Calu3 (cell line): ENCODE measurements at regions of chr12 and their contacts with region 1.

Region 1: DNA sequence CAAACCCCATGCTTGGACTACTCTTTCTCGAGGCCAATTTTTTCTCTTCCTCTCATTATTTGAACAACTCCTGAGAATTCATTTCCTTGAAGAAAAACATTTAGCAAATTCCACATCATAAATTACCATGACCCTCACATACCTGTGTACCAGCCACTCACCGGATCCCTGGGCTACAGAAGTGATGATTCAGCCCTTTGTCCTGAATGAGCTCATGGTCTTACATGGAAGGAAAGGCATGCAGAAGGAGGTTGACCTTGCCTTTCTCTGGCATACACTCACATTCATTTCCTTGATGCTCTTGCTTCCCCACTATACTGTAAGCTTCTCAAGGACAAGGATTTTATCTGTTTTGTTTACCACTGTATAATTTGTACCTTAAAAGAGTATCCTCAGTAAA is 191.5 kb downstream of the SLC5A8 start:
- DNase-seq: peak; percentile 88
- H3K4me3 Mint-ChIP-seq: peak overlapping the region; percentile 12
- H3K27ac Mint-ChIP-seq: peak overlapping the region; percentile 99
- H3K4me1 Mint-ChIP-seq: peaks cover 54% of the 10 kb centered on the region
- H3K27me3 Mint-ChIP-seq: no peaks in the 10 kb centered on the region
- CTCF ChIP-seq: no peak

Region 2: DNA sequence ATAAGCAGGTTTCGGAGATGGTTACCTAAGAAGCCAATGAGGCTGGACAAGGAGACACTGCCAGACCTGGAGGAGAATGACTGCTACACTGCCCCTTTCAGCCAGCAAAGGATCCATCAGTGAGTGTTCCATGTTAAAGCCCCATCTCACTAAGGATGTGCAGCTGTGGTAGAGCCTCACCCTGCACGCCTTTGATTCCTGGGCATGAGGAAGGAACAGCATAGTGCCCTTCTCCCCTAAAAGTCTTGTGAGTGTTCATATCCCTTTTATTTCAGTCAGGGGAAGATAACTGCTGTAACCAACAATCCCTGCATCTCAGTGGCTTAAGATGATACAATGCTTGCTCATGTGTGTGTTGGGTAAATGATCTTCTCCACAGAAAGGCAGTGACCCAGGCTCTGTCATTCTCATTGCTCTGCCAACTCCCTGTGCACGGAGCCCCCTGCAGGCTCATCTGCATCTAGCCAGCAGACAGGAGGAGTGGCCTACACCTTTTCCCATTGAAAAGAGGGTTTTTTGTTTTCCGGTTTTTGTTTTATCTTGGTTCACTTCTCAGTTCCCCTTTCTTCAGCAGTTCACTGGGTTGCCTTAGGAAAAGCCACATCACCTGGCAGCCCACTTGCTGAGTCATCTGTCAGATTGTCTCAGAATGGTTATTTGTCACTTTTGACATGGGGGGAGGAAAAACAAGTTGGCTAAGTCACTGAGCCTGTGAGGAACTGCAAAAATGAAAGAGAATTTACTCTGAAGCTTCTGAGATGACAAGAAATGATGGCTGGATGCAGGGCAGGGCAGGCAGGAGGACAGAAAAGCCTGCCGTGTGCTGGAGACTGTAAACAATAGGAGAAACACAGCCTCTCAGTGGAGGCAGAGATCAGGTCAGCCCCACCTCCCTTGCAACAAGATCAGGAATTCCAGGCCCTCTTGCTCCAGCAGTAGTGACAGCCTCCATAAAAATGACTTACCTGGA is 30.7 kb before region 1 on chr12:
- CTCF ChIA-PET with region 1: no interaction called
- intact Hi-C with region 1: loop called (anchors 2 kb)
- DNase-seq: peak; percentile 72
- H3K4me3 Mint-ChIP-seq: no peak overlapping the region
- H3K27ac Mint-ChIP-seq: peak overlapping the region; percentile 12
- H3K4me1 Mint-ChIP-seq: peaks cover 10% of the 10 kb centered on the region
- H3K27me3 Mint-ChIP-seq: no peaks in the 10 kb centered on the region
- CTCF ChIP-seq: peak; percentile 22

Region 3: GRCh38 chr12:101051901-101052550 is 33.5 kb after region 1 on chr12:
- CTCF ChIA-PET with region 1: no interaction called
- intact Hi-C with region 1: loop called (anchors 5 kb)
- DNase-seq: peak; percentile 47
- H3K4me3 Mint-ChIP-seq: peak overlapping the region; percentile 15
- H3K27ac Mint-ChIP-seq: peak overlapping the region; percentile 71
- H3K4me1 Mint-ChIP-seq: peaks cover 26% of the 10 kb centered on the region
- H3K27me3 Mint-ChIP-seq: no peaks in the 10 kb centered on the region
- CTCF ChIP-seq: no peak

Region 4: DNA sequence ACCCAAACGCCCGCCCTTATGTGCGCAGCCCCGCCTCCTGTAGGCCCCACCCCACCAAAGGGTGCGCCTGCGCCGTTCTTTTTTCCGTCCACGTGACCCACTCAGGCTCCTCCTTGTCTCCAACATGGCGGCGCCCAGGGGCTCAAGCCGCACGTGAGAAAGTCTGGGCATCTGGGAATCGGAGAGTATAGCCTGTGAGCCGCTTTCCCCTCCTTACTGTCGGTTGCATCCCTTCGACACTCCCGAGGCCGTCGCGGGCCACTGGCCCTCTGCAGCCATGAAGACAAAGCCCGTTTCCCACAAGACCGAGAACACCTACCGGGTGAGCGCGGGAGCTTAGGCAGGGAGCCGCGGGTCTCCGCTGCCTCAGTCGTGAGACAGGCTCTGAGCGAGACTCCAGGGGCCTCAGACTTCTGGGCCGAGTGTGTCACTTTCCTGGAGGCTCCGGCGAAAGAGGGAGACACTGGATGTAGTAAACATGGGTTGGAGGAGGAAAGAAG is 261.5 kb after region 1 on chr12 and contains the start of gene UTP20:
- CTCF ChIA-PET with region 1: interaction called, 4 read pairs
- intact Hi-C with region 1: loop called (anchors 1 kb)
- DNase-seq: peak; percentile 97
- H3K4me3 Mint-ChIP-seq: peak within 1 kb of the TSS; percentile 92
- H3K27ac Mint-ChIP-seq: peak within 1 kb of the TSS; percentile 91
- H3K4me1 Mint-ChIP-seq: peaks cover 30% of the 10 kb centered on the region
- H3K27me3 Mint-ChIP-seq: no peaks in the 10 kb centered on the region
- CTCF ChIP-seq: no peak
- total RNA-seq, gene UTP20: 36.6 and 42.2 TPM in 2 replicates